ENCODE measurements at regions of chr2 and their contacts with region 1.

Region 1: DNA sequence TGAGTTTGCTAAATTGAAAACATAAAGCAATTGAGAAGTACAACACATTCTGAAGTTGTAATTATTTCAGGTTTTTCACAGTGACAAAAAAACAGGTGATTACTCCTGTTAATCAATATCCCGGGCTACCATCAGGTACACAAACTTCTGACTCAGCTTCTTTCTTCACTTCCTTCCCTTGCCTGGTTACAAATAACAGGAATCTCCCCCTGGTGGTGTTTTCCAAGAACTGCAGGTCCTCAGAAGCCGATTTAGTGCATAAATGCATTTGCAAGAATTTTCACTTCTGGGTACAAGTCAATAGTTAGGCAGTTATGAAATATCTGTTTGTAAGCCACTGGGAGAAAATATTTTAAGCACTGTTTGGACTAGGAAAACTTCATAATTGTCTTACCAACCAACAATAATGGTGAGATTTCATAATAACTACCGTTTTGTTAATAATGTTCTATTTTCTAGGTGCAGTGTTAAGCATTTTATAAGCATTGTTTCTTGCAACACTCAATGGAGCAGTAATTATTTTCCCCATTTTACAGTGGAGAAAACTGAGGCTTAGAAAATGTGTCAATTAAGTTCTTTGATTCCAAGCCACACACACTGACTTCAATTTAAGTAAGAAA is 12.4 kb upstream of the GMCL1 start:
- DNase-seq: peak in 8 of 9 donors; percentile 63 to 84 (median 79)
- ATAC-seq: peak; percentile 86
- H3K4me3 ChIP-seq: no peak overlapping the region
- H3K4me3 Mint-ChIP-seq: no peak overlapping the region
- H3K27ac ChIP-seq: no peak overlapping the region
- H3K27ac Mint-ChIP-seq: no peak overlapping the region
- H3K4me1 ChIP-seq: no peaks in the 10 kb centered on the region
- H3K4me1 Mint-ChIP-seq: peaks cover 0 to 15% (median 5%) of the 10 kb centered on the region in 7 donors
- H3K27me3 ChIP-seq: no peaks in the 10 kb centered on the region
- H3K27me3 Mint-ChIP-seq: no peaks in the 10 kb centered on the region

Region 2: GRCh38 chr2:69375494-69376353 is 441.3 kb before region 1 on chr2:
- CTCF ChIA-PET with region 1: no interaction called
- POLR2A ChIA-PET with region 1: no interaction called
- intact Hi-C with region 1: loop called in 1 of 2 experiments (anchors 5 kb)
- DNase-seq: peak in 5 of 9 donors; percentile 12 to 41 (median 19)
- ATAC-seq: peak; percentile 79
- H3K4me3 ChIP-seq: no peak overlapping the region
- H3K4me3 Mint-ChIP-seq: no peak overlapping the region
- H3K27ac ChIP-seq: no peak overlapping the region
- H3K27ac Mint-ChIP-seq: no peak overlapping the region
- H3K4me1 ChIP-seq: no peaks in the 10 kb centered on the region
- H3K4me1 Mint-ChIP-seq: peaks cover 14 to 31% (median 23%) of the 10 kb centered on the region in 7 donors
- H3K27me3 ChIP-seq: no peaks in the 10 kb centered on the region
- H3K27me3 Mint-ChIP-seq: no peaks in the 10 kb centered on the region

Region 3: GRCh38 chr2:69559442-69560146 is 257.4 kb before region 1 on chr2:
- CTCF ChIA-PET with region 1: interaction called, 4 read pairs
- POLR2A ChIA-PET with region 1: no interaction called
- intact Hi-C with region 1: loop called (anchors 1 kb)
- DNase-seq: peak in 3 of 9 donors; percentile 22 to 32 (median 28)
- ATAC-seq: peak; percentile 75
- H3K4me3 ChIP-seq: no peak overlapping the region
- H3K4me3 Mint-ChIP-seq: peak overlapping the region in 9 of 10 donors; percentile 16 to 78 (median 48)
- H3K27ac ChIP-seq: no peak overlapping the region
- H3K27ac Mint-ChIP-seq: peak overlapping the region in 8 of 9 donors; percentile 10 to 83 (median 57)
- H3K4me1 ChIP-seq: peaks cover 8 to 62% of the 10 kb centered on the region in 2 donors
- H3K4me1 Mint-ChIP-seq: peaks cover 57 to 97% (median 93%) of the 10 kb centered on the region in 7 donors
- H3K27me3 ChIP-seq: no peaks in the 10 kb centered on the region
- H3K27me3 Mint-ChIP-seq: no peaks in the 10 kb centered on the region

Region 4: GRCh38 chr2:69741619-69742466 is 75.2 kb before region 1 on chr2 and contains the start of gene ANXA4:
- CTCF ChIA-PET with region 1: no interaction called
- POLR2A ChIA-PET with region 1: no interaction called
- intact Hi-C with region 1: loop called (anchors 5 kb)
- DNase-seq: peak; percentile 23 to 75 (median 33)
- ATAC-seq: peak; percentile 83
- H3K4me3 ChIP-seq: peak within 1 kb of the TSS; percentile 63
- H3K4me3 Mint-ChIP-seq: peak within 1 kb of the TSS; percentile 76 to 98 (median 94)
- H3K27ac ChIP-seq: peak within 1 kb of the TSS; percentile 67
- H3K27ac Mint-ChIP-seq: peak within 1 kb of the TSS in 8 of 9 donors; percentile 72 to 93 (median 86)
- H3K4me1 ChIP-seq: peaks cover 0 to 2% of the 10 kb centered on the region in 2 donors
- H3K4me1 Mint-ChIP-seq: peaks cover 6 to 36% (median 14%) of the 10 kb centered on the region in 7 donors
- H3K27me3 ChIP-seq: no peaks in the 10 kb centered on the region
- H3K27me3 Mint-ChIP-seq: peaks cover 0 to 21% (median 0%) of the 10 kb centered on the region in 5 donors
- total RNA-seq, gene ANXA4: 8.0 to 75.6 (median 15.9) TPM

Region 5: DNA sequence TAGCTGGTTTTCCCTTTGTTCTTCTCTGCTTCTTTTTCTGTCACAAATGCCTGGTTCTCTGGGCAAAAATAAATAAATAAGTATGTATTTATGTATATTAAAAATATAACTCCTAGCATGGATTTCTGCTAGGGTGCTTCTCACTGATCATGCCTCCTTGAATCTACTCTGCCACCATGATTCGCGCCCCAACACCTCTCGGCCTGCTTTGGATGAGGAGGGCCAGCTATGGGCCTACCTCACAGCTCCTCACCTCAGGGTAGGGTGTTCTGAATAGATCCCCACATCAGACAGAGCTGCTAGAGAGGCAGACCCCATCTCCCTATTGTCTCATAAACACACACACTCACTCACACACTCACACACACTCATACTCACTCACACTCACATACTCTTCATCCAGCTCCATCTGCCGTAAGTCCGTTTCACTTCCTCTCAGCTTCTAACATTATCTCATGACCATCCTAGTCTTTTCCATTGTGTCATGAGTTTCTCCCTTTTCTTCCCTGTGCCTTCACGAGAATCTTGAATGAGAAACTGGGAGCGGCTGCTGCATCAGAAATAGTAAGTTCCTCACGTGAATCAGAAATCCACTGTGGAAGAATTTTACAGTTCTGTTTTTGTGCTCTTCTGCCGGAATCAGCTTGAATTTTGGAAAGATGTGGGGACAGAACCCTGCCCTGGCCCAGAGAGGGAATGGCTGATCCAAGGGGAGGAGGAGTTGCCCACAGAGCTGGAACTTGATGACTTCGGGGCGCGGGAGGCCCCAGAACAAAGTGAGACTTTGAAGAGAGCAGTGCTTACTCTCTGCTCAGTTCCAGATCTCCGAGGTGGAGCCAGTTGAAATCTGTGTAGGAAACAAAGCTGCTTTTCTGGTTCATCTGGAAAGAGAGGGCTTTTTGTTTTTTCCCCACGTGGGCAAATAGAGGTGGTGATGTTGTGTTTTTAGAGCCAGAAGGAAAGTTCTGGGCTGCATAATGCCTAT is 54.2 kb before region 1 on chr2:
- CTCF ChIA-PET with region 1: interaction called, 3 read pairs
- POLR2A ChIA-PET with region 1: no interaction called
- intact Hi-C with region 1: loop called in 1 of 2 experiments (anchors 5 kb)
- DNase-seq: no peak
- ATAC-seq: no peak
- H3K4me3 ChIP-seq: no peak overlapping the region
- H3K4me3 Mint-ChIP-seq: no peak overlapping the region
- H3K27ac ChIP-seq: no peak overlapping the region
- H3K27ac Mint-ChIP-seq: no peak overlapping the region
- H3K4me1 ChIP-seq: no peaks in the 10 kb centered on the region
- H3K4me1 Mint-ChIP-seq: peaks cover 6 to 42% (median 20%) of the 10 kb centered on the region in 7 donors
- H3K27me3 ChIP-seq: no peaks in the 10 kb centered on the region
- H3K27me3 Mint-ChIP-seq: no peaks in the 10 kb centered on the region

Region 6: GRCh38 chr2:70104231-70105111 is 287.4 kb after region 1 on chr2:
- CTCF ChIA-PET with region 1: no interaction called
- POLR2A ChIA-PET with region 1: no interaction called
- intact Hi-C with region 1: no loop called
- DNase-seq: peak in 4 of 9 donors; percentile 35 to 47 (median 46)
- ATAC-seq: no peak
- H3K4me3 ChIP-seq: peak overlapping the region; percentile 35
- H3K4me3 Mint-ChIP-seq: peak overlapping the region; percentile 60 to 87 (median 82)
- H3K27ac ChIP-seq: peak overlapping the region; percentile 72
- H3K27ac Mint-ChIP-seq: peak overlapping the region; percentile 88 to 97 (median 93)
- H3K4me1 ChIP-seq: peaks cover 37 to 45% of the 10 kb centered on the region in 2 donors
- H3K4me1 Mint-ChIP-seq: peaks cover 34 to 58% (median 55%) of the 10 kb centered on the region in 7 donors
- H3K27me3 ChIP-seq: no peaks in the 10 kb centered on the region
- H3K27me3 Mint-ChIP-seq: no peaks in the 10 kb centered on the region

Measured in naive thymus-derived CD4-positive, alpha-beta T cell (primary cell).